Endothelial cell of umbilical vein (primary cell): ENCODE measurements at regions of chr9 and their contacts with region 1.

Region 1: GRCh38 chr9:15211160-15211814 is 95.7 kb downstream of the TTC39B start:
- DNase-seq: peak; percentile 80
- H3K4me3 ChIP-seq: no peak overlapping the region
- H3K27ac ChIP-seq: no peak overlapping the region
- H3K4me1 ChIP-seq: peaks cover 3% of the 10 kb centered on the region
- H3K27me3 ChIP-seq: no peaks in the 10 kb centered on the region
- CTCF ChIP-seq: peak; percentile 79 to 81
- POLR2A ChIP-seq: no peak

Region 2: DNA sequence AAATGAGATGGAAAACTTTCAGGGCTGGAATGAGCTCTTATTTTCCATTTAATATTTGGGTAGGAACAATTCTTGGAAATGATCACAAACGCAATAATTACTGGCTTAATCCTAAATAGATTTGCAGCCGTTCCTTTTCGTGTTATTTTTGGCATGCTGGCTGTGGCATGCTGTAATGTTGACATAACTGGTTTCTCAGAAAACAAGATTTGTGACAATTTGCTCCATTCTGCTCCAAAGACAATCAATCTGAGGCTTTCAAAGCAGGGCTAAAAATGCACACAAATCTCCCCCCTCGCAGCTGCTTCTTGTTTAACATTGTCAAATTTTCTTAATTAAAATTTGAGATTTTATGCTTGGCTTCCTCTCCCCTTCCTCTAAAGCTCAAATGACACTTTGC is 55.5 kb before region 1 on chr9:
- CTCF ChIA-PET with region 1: no interaction called
- POLR2A ChIA-PET with region 1: no interaction called
- dilution Hi-C with region 1: no loop called
- intact Hi-C with region 1: loop called (anchors 5 kb)
- DNase-seq: peak; percentile 97
- H3K4me3 ChIP-seq: no peak overlapping the region
- H3K27ac ChIP-seq: peak overlapping the region; percentile 79
- H3K4me1 ChIP-seq: peaks cover 36% of the 10 kb centered on the region
- H3K27me3 ChIP-seq: no peaks in the 10 kb centered on the region
- CTCF ChIP-seq: no peak
- POLR2A ChIP-seq: no peak

Region 3: DNA sequence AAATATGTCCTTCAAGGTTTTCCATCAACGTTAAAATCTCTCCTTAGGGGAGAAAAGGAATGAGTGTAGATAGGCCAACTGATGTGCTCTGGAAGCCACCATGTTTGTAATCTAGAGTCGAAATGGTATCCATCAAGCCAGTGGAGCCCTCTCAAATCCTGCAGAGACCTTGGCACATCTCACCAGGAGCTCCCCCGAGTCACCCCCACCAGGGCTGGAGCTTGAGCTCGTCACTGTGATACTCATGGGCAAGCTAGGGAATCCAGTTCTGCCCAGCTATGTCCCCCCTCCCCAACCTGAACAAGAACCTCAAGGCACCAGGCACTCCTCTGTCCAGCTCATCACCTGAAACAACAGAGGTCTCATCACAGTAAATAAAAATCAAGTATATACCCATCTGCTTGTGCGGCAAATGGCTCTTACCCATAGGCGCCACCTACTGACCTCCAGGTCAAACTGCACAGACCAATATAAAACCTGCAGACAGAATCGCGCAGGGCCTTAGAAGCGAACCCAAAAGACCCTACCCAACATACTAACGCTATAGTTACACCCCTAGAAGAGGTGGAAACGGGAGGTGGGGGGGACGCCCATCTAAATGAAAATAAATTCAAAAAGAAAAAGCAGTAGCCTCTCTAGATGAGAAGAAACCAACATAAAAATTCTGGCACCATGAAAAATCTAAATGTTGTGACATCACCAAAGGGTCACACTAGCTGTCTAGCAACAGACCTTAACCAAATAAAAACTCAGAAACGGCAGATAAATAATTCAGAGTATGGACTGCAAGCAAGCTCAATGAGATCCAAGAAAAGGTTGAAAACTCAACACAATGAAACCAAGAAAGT is 20.7 kb after region 1 on chr9:
- CTCF ChIA-PET with region 1: interaction called, 18 read pairs
- POLR2A ChIA-PET with region 1: no interaction called
- dilution Hi-C with region 1: no loop called
- intact Hi-C with region 1: no loop called
- DNase-seq: peak; percentile 40
- H3K4me3 ChIP-seq: no peak overlapping the region
- H3K27ac ChIP-seq: no peak overlapping the region
- H3K4me1 ChIP-seq: no peaks in the 10 kb centered on the region
- H3K27me3 ChIP-seq: no peaks in the 10 kb centered on the region
- CTCF ChIP-seq: peak; percentile 59 to 64
- POLR2A ChIP-seq: no peak

Region 4: GRCh38 chr9:15422372-15423230 is 211.3 kb after region 1 on chr9 and contains the start of gene SNAPC3:
- CTCF ChIA-PET with region 1: interaction called, 5 read pairs
- POLR2A ChIA-PET with region 1: no interaction called
- dilution Hi-C with region 1: no loop called
- intact Hi-C with region 1: loop called (anchors 1 kb)
- DNase-seq: peak; percentile 98
- H3K4me3 ChIP-seq: peak within 1 kb of the TSS; percentile 80 to 100 (median 94)
- H3K27ac ChIP-seq: peak within 1 kb of the TSS; percentile 80
- H3K4me1 ChIP-seq: peaks cover 11% of the 10 kb centered on the region
- H3K27me3 ChIP-seq: no peaks in the 10 kb centered on the region
- CTCF ChIP-seq: no peak
- POLR2A ChIP-seq: peak; percentile 88
- total RNA-seq, gene SNAPC3: 30.9 and 32.6 TPM in 2 replicates